Mammary epithelial cell (primary cell): ENCODE measurements at regions of chr9 and their contacts with region 1.

Region 1: DNA sequence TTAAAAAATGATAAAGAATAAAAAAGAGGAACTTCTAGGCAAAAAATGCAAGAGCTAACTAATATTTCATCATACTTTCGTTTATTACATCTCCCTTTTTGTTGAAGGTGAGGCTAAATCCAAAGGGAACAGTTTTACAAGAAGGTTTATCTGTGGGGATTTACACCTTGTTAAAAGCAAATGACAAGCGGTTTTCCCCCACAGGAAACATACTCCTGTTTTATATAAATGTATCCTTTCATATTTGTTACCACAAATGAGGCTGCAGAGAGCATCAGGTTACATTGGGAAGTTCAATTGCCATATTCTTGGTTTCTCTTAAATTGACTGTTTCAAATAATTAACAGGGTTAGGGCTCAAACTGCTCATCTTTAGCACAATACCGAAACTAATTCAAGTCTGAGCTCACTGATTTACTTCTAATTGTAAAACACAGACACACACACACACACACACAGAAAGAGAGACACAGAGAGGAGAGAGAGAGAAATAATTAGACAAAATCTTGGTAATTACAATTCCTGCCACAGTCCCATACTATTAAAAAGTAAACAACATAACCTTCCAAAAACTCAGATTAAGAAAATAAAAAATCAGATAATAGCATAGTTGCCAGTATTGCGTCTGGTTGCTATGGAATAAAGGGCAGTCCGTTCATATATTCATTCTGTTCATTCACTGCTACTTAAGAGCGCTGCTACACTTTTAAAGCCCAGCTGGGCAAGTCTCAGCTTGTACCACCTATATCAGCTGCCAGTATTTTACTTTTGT is 17.1 kb downstream of the RFX3 start:
- DNase-seq: peak; percentile 47
- H3K4me3 ChIP-seq: peak overlapping the region; percentile 33 to 60 (median 58)
- H3K27ac ChIP-seq: peak overlapping the region; percentile 93
- H3K4me1 ChIP-seq: no peaks in the 10 kb centered on the region
- H3K27me3 ChIP-seq: no peaks in the 10 kb centered on the region
- CTCF ChIP-seq: no peak

Region 2: DNA sequence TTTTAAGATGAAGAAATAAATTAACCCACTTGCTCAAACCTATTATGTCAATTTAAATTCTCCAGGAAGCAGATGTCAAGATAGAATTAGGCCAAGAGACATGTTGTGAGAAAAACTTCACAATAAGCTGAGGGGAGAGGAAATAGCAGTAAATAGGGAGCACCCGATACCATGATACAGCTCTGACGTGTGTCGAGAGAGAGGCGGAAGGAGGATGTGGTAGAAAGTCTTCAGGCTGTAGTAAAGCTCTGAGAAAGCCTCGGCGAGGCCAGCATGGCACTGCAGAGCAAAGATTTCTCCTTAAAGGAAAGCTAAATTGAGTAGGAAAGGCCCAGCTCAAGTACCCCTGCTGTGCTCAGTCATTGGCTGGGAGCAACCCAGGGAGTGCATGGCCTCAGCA is 658.8 kb before region 1 on chr9:
- CTCF ChIA-PET with region 1: no interaction called
- dilution Hi-C with region 1: no loop called
- in situ Hi-C with region 1: no loop called
- intact Hi-C with region 1: loop called (anchors 2 kb)
- DNase-seq: no peak
- H3K4me3 ChIP-seq: no peak overlapping the region
- H3K27ac ChIP-seq: no peak overlapping the region
- H3K4me1 ChIP-seq: peaks cover 4% of the 10 kb centered on the region
- H3K27me3 ChIP-seq: peaks cover 2% of the 10 kb centered on the region
- CTCF ChIP-seq: no peak

Region 3: GRCh38 chr9:3281399-3281798 is 227.3 kb before region 1 on chr9:
- CTCF ChIA-PET with region 1: no interaction called
- dilution Hi-C with region 1: no loop called
- in situ Hi-C with region 1: no loop called
- intact Hi-C with region 1: no loop called
- DNase-seq: no peak
- H3K4me3 ChIP-seq: no peak overlapping the region
- H3K27ac ChIP-seq: no peak overlapping the region
- H3K4me1 ChIP-seq: no peaks in the 10 kb centered on the region
- H3K27me3 ChIP-seq: no peaks in the 10 kb centered on the region
- CTCF ChIP-seq: no peak

Region 4: DNA sequence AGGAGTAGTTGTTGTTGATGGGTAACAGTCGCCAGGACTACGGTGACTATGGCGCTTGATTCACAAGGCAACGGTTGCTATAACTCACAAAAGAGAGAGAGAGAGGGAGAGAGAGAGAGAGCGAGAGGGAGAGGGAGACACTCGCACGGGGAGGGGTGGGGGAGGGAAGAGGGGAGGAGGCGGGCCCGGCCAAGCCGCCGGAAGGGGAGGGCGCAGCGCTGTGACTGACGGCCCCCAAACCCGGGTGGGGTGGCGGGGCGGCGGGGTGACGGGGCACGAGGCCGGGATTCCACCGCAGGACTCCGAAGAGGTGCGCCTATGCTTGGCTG is 17.1 kb after region 1 on chr9 and contains the start of gene RFX3:
- CTCF ChIA-PET with region 1: no interaction called
- dilution Hi-C with region 1: no loop called
- in situ Hi-C with region 1: no loop called
- intact Hi-C with region 1: loop called (anchors 1 kb)
- DNase-seq: peak; percentile 94
- H3K4me3 ChIP-seq: peak within 1 kb of the TSS; percentile 92 to 100 (median 98)
- H3K27ac ChIP-seq: peak within 1 kb of the TSS; percentile 99
- H3K4me1 ChIP-seq: peaks cover 8% of the 10 kb centered on the region
- H3K27me3 ChIP-seq: no peaks in the 10 kb centered on the region
- CTCF ChIP-seq: no peak
- total RNA-seq, gene RFX3: 2.3 to 7.9 TPM